Activated naive CD4-positive, alpha-beta T cell treated with anti-CD3 and anti-CD28 coated beads for 36 hours (primary cell): ENCODE measurements at regions of chr1 and their contacts with region 1.

Region 1: GRCh38 chr1:160951443-160952128 is 3.0 kb downstream of the ITLN2 start:
- DNase-seq: peak; percentile 85
- H3K4me3 Mint-ChIP-seq: no peak overlapping the region
- H3K27ac Mint-ChIP-seq: no peak overlapping the region
- H3K4me1 Mint-ChIP-seq: peaks cover 3% of the 10 kb centered on the region
- H3K27me3 Mint-ChIP-seq: no peaks in the 10 kb centered on the region

Region 2: GRCh38 chr1:160428655-160429054 is 522.9 kb before region 1 on chr1:
- CTCF ChIA-PET with region 1: no interaction called
- intact Hi-C with region 1: loop called (anchors 2 kb)
- DNase-seq: peak; percentile 66
- H3K4me3 Mint-ChIP-seq: peak overlapping the region; percentile 23
- H3K27ac Mint-ChIP-seq: peak overlapping the region; percentile 88
- H3K4me1 Mint-ChIP-seq: peaks cover 65% of the 10 kb centered on the region
- H3K27me3 Mint-ChIP-seq: no peaks in the 10 kb centered on the region

Region 3: GRCh38 chr1:160726498-160727315 is 224.9 kb before region 1 on chr1:
- CTCF ChIA-PET with region 1: interaction called, 71 read pairs
- intact Hi-C with region 1: loop called (anchors 1 kb)
- DNase-seq: peak; percentile 81
- H3K4me3 Mint-ChIP-seq: no peak overlapping the region
- H3K27ac Mint-ChIP-seq: no peak overlapping the region
- H3K4me1 Mint-ChIP-seq: peaks cover 34% of the 10 kb centered on the region
- H3K27me3 Mint-ChIP-seq: no peaks in the 10 kb centered on the region

Region 4: GRCh38 chr1:160830321-160831153 is 121.0 kb before region 1 on chr1:
- CTCF ChIA-PET with region 1: interaction called, 229 read pairs
- intact Hi-C with region 1: loop called (anchors 1 kb)
- DNase-seq: peak; percentile 91
- H3K4me3 Mint-ChIP-seq: no peak overlapping the region
- H3K27ac Mint-ChIP-seq: peak overlapping the region; percentile 32
- H3K4me1 Mint-ChIP-seq: peaks cover 18% of the 10 kb centered on the region
- H3K27me3 Mint-ChIP-seq: no peaks in the 10 kb centered on the region

Region 5: GRCh38 chr1:160862203-160863060 is 89.2 kb before region 1 on chr1 and contains the start of gene CD244:
- CTCF ChIA-PET with region 1: interaction called, 21 read pairs
- intact Hi-C with region 1: no loop called
- DNase-seq: peak; percentile 76
- H3K4me3 Mint-ChIP-seq: no peak within 1 kb of the TSS
- H3K27ac Mint-ChIP-seq: no peak within 1 kb of the TSS
- H3K4me1 Mint-ChIP-seq: peaks cover 10% of the 10 kb centered on the region
- H3K27me3 Mint-ChIP-seq: no peaks in the 10 kb centered on the region
- total RNA-seq, gene CD244: 0.15 TPM in 1 of 2 experiments, not detected in the other

Region 6: DNA sequence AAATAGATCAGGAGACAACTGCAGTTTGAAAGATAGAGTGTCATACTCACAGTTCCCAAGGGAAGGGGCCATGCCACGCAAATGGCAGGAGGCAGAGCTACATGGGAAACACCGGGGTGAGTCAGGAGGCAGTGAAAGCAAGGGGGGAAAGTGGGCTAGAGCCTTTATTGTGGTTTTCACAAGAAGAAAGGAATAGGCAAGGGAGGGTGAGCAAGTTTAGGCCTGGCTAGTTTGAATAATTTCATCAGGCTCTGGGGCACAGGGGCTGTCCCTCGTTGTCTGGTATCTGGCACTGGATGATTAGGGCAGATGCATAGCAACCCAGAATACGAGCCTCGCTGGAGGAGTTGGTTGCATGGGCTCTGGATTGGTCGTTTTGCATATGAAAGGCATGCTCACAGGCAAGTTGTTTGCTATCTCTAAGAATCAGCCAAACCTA is 20.1 kb after region 1 on chr1:
- CTCF ChIA-PET with region 1: interaction called, 7 read pairs
- intact Hi-C with region 1: loop called (anchors 2 kb)
- DNase-seq: peak; percentile 70
- H3K4me3 Mint-ChIP-seq: no peak overlapping the region
- H3K27ac Mint-ChIP-seq: no peak overlapping the region
- H3K4me1 Mint-ChIP-seq: peaks cover 7% of the 10 kb centered on the region
- H3K27me3 Mint-ChIP-seq: no peaks in the 10 kb centered on the region

Region 7: DNA sequence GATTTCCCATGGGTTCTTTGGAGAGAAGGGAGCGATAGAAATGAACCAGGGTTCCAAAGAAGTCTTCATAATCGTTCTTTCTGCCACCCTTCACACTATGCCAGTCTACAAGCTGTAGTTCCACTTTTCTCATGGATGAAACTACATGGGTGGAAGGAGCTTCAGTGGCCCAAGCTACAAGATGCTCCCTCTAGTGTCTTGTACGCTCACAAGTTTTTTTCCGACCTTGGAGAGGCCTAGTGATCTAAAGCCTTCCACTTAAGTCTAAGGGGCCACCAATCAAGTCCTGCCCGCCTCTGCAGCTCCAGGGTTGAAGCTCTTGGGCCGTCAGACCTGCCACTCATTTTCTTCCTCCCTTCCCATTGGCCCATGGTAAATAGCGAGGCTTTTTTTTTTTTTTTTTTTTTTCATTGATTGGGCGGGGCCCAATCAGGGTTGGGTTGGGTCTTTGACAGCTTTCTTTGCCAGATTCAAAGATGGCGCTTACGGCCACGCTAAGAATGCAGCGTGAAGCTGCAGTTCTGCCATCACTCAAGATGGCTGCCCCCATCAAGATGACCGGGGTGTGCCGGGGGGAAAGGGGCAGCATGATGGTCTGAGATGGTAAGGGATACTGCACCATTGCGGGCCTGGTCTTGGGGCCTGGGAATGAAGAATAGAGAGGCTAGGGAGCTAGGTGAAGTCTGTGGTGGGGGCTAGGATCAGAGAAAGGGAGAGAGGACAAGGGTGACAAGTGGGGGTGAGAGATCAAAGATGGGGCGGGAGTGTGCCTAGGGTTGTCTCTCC is 274.1 kb after region 1 on chr1 and contains the start of gene TOMM40L:
- CTCF ChIA-PET with region 1: no interaction called
- intact Hi-C with region 1: no loop called
- DNase-seq: peak; percentile 95
- H3K4me3 Mint-ChIP-seq: peak within 1 kb of the TSS; percentile 100
- H3K27ac Mint-ChIP-seq: peak within 1 kb of the TSS; percentile 98
- H3K4me1 Mint-ChIP-seq: peaks cover 36% of the 10 kb centered on the region
- H3K27me3 Mint-ChIP-seq: no peaks in the 10 kb centered on the region
- total RNA-seq, gene TOMM40L: 13.2 to 14.3 TPM